A549 (cell line): ENCODE measurements at regions of chr3 and their contacts with region 1.

Region 1: GRCh38 chr3:9715764-9716437 is 12.3 kb downstream of the CPNE9 start:
- DNase-seq: peak; percentile 78 to 86
- ATAC-seq: peak; percentile 95 to 97
- H3K4me3 ChIP-seq: no peak overlapping the region
- H3K27ac ChIP-seq: peak overlapping the region in 1 of 2 experiments; percentile 32; a peak in 1 of 6 replicates
- H3K4me1 ChIP-seq: peaks cover 11% of the 10 kb centered on the region; the same call in 2 of the 3 replicates
- CTCF ChIP-seq: peak; percentile 87
- EP300 ChIP-seq: no peak
- POLR2A ChIP-seq: no peak
- RAD21 ChIP-seq: peak; percentile 89 to 91

Region 2: GRCh38 chr3:9409981-9410854 is 305.7 kb before region 1 on chr3:
- CTCF ChIA-PET with region 1: no interaction called
- POLR2A ChIA-PET with region 1: no interaction called
- DNase-seq: no peak
- ATAC-seq: no peak
- H3K4me3 ChIP-seq: no peak overlapping the region
- H3K27ac ChIP-seq: no peak overlapping the region
- H3K4me1 ChIP-seq: peaks cover 58% of the 10 kb centered on the region
- CTCF ChIP-seq: no peak
- EP300 ChIP-seq: no peak
- POLR2A ChIP-seq: no peak
- RAD21 ChIP-seq: no peak

Region 3: GRCh38 chr3:9659849-9660248 is 56.1 kb before region 1 on chr3:
- CTCF ChIA-PET with region 1: no interaction called
- POLR2A ChIA-PET with region 1: no interaction called
- DNase-seq: no peak
- ATAC-seq: no peak
- H3K4me3 ChIP-seq: no peak overlapping the region
- H3K27ac ChIP-seq: no peak overlapping the region
- H3K4me1 ChIP-seq: no peaks in the 10 kb centered on the region
- CTCF ChIP-seq: no peak
- EP300 ChIP-seq: no peak
- POLR2A ChIP-seq: no peak
- RAD21 ChIP-seq: no peak

Region 4: DNA sequence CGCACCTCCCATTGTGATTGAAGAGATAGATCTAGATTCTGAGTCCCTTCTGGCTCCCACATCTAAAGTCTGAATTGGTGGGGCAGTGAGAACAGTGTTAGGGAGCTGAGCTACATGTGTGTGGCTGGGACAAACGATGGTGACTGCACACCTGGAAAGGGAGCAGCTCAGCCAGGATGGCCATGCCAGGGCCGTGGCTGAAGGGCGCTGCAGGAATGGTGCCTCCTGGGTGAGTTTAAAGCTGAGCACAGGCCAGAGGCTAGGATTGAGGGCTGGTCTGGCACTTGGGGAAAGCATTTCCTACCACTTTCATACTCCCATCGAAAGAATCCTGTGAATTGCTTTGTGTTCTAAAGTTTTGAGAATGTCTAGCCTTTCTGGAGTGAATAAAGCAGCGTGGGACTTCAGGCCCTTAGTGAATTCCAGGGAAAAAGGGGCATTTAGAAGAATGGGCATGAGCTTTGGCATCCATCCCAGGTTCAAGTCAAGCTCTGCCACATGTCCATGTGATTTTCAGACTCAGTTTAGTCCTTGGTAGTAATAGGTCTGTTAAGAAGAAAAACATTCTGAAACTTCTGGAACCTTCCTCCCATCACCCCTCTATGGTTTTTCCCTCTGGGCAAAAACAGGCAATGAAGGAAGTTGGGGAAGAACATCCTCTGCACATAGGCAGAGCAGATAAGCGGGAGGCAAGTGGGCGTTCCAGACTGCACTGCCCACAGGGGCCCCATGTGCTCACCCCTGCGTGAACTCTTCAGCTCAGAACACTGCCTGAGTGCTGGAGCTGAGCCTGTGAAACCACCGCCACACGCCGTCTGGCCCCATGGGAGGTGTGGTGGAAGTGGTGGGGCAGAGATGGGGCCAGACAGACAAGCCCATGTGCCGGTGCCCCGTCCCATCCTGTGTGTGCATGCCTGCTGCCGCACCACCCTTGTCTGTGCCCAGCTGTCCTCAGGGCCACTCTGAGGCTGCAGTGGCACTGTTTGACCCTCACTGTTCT is 25.1 kb before region 1 on chr3:
- CTCF ChIA-PET with region 1: interaction called, 15 read pairs
- POLR2A ChIA-PET with region 1: no interaction called
- DNase-seq: no peak
- ATAC-seq: no peak
- H3K4me3 ChIP-seq: no peak overlapping the region
- H3K27ac ChIP-seq: no peak overlapping the region
- H3K4me1 ChIP-seq: no peaks in the 10 kb centered on the region
- CTCF ChIP-seq: no peak
- EP300 ChIP-seq: no peak
- POLR2A ChIP-seq: no peak
- RAD21 ChIP-seq: no peak

Region 5: GRCh38 chr3:9731206-9732079 is 15.5 kb after region 1 on chr3 and contains the start of gene BRPF1:
- CTCF ChIA-PET with region 1: interaction called, 99 read pairs
- POLR2A ChIA-PET with region 1: interaction called, 4 read pairs
- DNase-seq: peak; percentile 98 to 99
- ATAC-seq: peak; percentile 94 to 97
- H3K4me3 ChIP-seq: peak within 1 kb of the TSS; percentile 92
- H3K27ac ChIP-seq: peak within 1 kb of the TSS; percentile 93 to 97
- H3K4me1 ChIP-seq: peaks cover 16% of the 10 kb centered on the region
- CTCF ChIP-seq: no peak
- EP300 ChIP-seq: no peak
- POLR2A ChIP-seq: peak; percentile 63
- RAD21 ChIP-seq: no peak
- polyA plus RNA-seq, gene BRPF1: 8.6 and 10.1 TPM in 2 replicates

Region 6: DNA sequence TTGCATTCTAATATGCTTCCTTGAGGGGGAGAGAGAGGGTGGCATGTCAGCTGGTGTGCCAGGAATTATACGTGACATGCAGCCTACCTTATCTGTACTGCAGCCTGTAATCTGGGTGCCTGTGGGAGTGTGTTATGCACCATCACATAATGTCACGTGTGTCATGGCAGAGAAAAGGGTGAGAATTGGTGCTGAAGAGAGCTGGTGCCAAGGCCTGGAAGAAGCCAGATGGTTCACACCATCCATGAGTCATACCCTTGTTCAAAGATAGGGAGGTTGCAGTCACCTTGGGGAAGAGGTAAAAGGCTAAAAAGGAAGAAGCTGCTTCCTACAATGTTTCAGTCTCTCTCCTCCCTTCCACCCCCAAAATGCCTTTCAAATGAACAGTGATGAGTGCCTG is 20.9 kb after region 1 on chr3:
- CTCF ChIA-PET with region 1: interaction called, 15 read pairs
- POLR2A ChIA-PET with region 1: no interaction called
- DNase-seq: no peak
- ATAC-seq: no peak
- H3K4me3 ChIP-seq: no peak overlapping the region
- H3K27ac ChIP-seq: no peak overlapping the region
- H3K4me1 ChIP-seq: peaks cover 12% of the 10 kb centered on the region
- CTCF ChIP-seq: no peak
- EP300 ChIP-seq: no peak
- POLR2A ChIP-seq: no peak
- RAD21 ChIP-seq: no peak

Region 7: DNA sequence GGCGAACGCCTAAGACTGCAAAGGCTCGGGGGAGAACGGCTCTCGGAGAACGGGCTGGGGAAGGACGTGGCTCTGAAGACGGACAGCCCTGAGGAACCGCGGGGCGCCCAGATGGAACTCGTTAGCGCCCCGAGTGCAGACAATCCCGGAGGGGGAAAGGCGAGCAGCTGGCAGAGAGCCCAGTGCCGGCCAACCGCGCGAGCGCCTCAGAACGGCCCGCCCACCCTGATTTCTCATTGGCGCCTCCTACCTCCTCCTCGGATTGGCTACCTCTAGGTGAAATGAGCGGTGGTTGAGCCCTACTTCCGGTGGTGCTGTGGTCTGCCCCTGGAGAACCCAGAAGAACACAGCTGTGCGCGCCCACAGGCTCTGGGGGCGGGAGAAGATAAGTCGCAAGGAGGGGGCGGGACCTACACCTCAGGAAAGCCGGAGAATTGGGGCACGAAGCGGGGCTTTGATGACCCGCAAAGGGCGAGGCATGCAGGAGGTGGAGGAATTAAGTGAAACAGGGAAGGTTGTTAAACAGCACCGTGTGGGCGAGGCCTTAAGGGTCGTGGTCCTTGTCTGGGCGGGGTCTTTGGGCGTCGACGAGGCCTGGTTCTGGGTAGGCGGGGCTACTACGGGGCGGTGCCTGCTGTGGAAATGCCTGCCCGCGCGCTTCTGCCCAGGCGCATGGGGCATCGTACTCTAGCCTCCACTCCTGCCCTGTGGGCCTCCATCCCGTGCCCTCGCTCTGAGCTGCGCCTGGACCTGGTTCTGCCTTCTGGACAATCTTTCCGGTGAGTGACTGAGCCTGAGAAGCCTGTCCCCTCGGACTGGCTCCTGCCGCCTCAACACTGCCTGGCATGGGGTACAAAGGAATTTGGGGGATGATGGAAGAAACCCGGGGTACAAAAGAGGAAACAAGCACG is 34.0 kb after region 1 on chr3 and contains the start of gene OGG1:
- CTCF ChIA-PET with region 1: interaction called, 22 read pairs
- POLR2A ChIA-PET with region 1: no interaction called
- DNase-seq: peak; percentile 98 to 99
- ATAC-seq: peak; percentile 95 to 98
- H3K4me3 ChIP-seq: peak within 1 kb of the TSS; percentile 72
- H3K27ac ChIP-seq: peak within 1 kb of the TSS; percentile 95 to 97
- H3K4me1 ChIP-seq: peaks cover 13% of the 10 kb centered on the region; the same call in 2 of the 3 replicates
- CTCF ChIP-seq: no peak
- EP300 ChIP-seq: no peak
- POLR2A ChIP-seq: peak; percentile 50
- RAD21 ChIP-seq: no peak; a peak in 1 of 5 replicates
- polyA plus RNA-seq, gene OGG1: 21.2 and 21.6 TPM in 2 replicates

Region 8: DNA sequence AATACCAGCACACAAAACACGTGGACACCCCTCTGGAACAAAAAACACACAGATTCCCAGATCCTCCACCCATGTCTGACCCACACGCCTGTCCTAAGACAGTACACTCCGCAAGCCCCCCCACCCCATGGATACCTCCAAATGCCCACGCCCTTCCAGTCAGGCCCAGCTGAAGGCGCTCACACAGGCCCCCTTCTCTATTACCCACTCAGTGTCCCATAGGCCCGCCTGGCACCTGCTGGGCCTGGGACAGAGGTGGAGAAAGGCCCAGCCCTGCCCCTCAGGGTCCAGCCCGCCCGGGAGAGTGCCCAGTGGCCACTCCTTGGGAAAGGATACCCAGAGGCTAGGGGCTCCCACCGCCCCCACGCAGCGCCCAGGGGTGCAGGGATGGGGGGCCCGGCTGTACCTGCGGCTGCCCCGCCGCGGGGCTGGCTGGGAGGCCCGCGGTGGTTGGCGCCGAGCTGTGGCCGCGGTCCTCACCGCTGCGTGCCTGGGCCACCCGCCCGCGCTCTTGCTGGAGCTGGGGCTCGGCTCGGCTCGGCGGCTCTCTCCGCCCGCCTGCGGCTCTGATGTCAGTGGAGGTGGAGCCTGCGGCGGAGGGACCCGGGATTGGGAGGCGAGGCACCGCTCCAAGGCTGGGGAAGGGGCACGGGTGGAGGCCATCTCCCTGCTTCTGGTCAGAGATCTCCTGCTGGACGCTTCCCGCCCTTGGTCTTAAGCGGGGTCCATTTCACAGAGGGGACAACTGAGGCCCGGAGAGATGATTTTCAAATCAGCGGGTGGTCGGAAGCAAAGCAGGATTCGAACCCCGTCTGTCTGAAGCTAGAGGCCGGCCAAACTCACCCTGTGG is 53.8 kb after region 1 on chr3 and contains the start of gene CAMK1:
- CTCF ChIA-PET with region 1: interaction called, 20 read pairs
- POLR2A ChIA-PET with region 1: no interaction called
- DNase-seq: peak; percentile 44 to 79
- ATAC-seq: peak; percentile 91 to 93
- H3K4me3 ChIP-seq: peak within 1 kb of the TSS; percentile 74
- H3K27ac ChIP-seq: peak within 1 kb of the TSS; percentile 92 to 95
- H3K4me1 ChIP-seq: peaks cover 27% of the 10 kb centered on the region
- CTCF ChIP-seq: no peak
- EP300 ChIP-seq: no peak
- POLR2A ChIP-seq: peak; percentile 69
- RAD21 ChIP-seq: no peak
- polyA plus RNA-seq, gene CAMK1: 13.5 and 16.0 TPM in 2 replicates

Region 9: GRCh38 chr3:9803494-9803893 is 87.6 kb after region 1 on chr3:
- CTCF ChIA-PET with region 1: interaction called, 11 read pairs
- POLR2A ChIA-PET with region 1: no interaction called
- DNase-seq: no peak
- ATAC-seq: no peak
- H3K4me3 ChIP-seq: no peak overlapping the region
- H3K27ac ChIP-seq: no peak overlapping the region
- H3K4me1 ChIP-seq: peaks cover 7% of the 10 kb centered on the region; the same call in 2 of the 3 replicates
- CTCF ChIP-seq: no peak
- EP300 ChIP-seq: no peak
- POLR2A ChIP-seq: no peak
- RAD21 ChIP-seq: no peak